Heart left ventricle (tissue), 16 donors: ENCODE measurements at regions of chr10 and their contacts with region 1.

Region 1: DNA sequence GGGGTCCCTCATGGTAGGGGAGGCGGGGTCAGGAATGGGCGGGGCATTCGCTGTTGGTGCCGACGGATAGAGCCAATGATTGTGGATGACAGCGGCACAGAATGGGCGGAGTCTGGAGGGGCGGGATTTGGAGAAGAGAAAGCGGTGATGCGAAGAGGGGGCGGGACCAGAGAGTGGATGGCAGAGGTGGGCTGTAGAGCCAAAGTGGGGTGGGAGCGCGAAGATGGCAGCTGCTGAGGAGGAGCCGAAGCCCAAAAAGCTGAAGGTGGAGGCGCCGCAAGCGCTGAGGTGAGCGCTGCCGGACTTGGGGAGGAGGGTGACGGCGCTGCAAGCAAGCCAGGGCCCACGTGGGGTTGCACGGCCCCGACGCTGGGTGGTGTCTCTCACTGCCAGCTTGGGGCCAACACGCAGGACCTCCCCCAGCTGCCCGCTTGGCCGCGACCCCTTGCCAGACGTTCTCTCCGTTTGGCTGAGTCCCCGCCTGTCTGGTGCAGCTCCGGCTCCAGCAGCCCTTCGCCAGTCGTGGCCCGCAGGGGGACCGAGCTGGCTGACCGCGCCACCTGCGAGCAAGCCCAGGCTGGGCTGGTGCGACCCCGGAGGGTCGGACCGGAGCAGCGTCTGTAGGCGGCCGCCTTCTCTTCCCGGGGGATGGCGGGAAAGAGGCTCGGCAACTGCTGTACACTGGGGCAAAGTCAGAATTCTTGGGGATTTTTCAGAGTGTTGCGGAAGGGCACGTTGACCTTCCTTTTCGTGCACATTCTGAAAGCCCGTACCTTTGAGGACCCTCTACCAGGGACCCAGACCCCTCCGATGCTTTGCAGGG is at the start of gene ADK:
- DNase-seq: peak; percentile 99 to 100 (median 100)
- ATAC-seq: peak; percentile 95 to 98 (median 98)
- H3K4me3 ChIP-seq: peak within 1 kb of the TSS; percentile 65 to 96 (median 88)
- H3K27ac ChIP-seq: peak within 1 kb of the TSS; percentile 85 to 97 (median 92)
- H3K4me1 ChIP-seq: peaks cover 0 to 42% (median 32%) of the 10 kb centered on the region in 12 donors
- H3K27me3 ChIP-seq: no peaks in the 10 kb centered on the region
- CTCF ChIP-seq: peak in 6 of 12 donors; percentile 10 to 62 (median 30)
- POLR2A ChIP-seq: peak; percentile 67 to 93
- total RNA-seq, gene ADK: 22.7 to 46.2 (median 39.8) TPM

Region 2: DNA sequence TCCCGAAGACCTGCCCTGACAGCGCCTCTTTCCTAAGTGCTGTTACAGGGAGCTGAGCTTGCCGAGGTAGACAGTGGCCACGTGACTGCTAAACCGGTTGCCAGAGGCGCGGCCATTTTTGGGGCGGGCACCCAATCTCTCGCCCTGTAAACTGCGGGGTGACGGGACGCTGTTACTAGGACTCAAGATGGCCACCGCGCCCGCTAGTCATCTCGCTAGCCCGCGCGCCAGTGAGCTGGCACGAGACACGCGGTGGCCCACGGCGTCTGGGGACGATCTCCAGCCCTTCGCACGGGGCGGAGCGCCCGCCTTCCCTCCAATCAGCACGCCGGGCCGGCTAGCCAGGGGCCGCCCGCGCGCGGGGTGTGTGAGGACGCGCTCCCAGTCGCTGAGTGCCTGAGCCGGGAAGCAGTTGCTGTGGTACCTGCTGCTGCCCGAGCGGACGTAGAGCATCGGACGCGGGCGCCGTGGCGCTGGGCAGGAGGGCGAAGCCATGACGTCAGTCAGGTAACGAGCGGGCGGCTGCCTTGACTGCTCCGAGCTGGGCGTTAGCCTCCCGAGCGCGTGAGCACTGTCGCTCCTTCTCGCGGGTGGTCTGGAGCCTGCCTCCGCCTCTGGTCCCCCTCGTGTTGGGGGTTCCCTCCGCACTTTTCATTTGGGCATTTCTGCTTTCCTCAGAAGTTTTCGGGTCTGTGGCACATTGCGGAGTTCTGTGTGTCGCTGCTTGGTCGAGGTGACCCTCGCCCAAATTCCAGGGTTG is 25.3 kb after region 1 on chr10:
- intact Hi-C with region 1: loop called in 1 of 10 experiments (anchors 1 kb)
- DNase-seq: peak; percentile 89 to 96 (median 95)
- ATAC-seq: peak; percentile 94 to 99 (median 98)
- H3K4me3 ChIP-seq: peak overlapping the region; percentile 45 to 96 (median 73)
- H3K27ac ChIP-seq: peak overlapping the region; percentile 11 to 90 (median 82)
- H3K4me1 ChIP-seq: peaks cover 0 to 31% (median 10%) of the 10 kb centered on the region in 12 donors
- H3K27me3 ChIP-seq: no peaks in the 10 kb centered on the region
- CTCF ChIP-seq: peak in 1 of 12 donors; percentile 30
- POLR2A ChIP-seq: peak in 1 of 2 donors; percentile 65

Region 3: DNA sequence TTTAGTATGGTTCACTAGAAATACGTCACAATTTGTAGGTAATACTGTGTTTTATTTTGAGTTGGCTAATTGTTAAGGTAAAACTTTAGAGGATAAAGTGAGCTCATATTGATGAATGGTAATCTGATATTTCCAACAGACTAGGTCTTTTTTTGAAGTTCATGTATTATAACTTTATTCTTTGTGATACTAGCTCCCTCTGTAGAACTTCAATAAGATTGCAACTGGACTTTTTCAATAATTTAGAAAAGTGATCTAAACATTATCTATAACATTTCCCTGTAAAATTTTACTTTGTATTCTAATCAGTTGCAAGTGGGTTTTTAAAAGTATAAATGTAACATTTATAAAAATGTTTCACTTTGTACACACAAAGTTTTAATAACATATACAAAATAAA is 83.3 kb after region 1 on chr10:
- intact Hi-C with region 1: loop called in 3 of 10 experiments (anchors 10 kb)
- DNase-seq: no peak
- ATAC-seq: no peak
- H3K4me3 ChIP-seq: no peak overlapping the region
- H3K27ac ChIP-seq: no peak overlapping the region
- H3K4me1 ChIP-seq: peaks cover 0 to 9% (median 0%) of the 10 kb centered on the region in 12 donors
- H3K27me3 ChIP-seq: no peaks in the 10 kb centered on the region
- CTCF ChIP-seq: peak in 10 of 12 donors; percentile 12 to 56 (median 44)
- POLR2A ChIP-seq: no peak